Motor neuron (in vitro differentiated cells): ENCODE measurements at regions of chr5 and their contacts with region 1.

Region 1: GRCh38 chr5:83919071-83920041 is 198.7 kb upstream of the HAPLN1 start:
- ATAC-seq: peak in 2 of 8 experiments; percentile 57 to 67
- H3K4me3 ChIP-seq: no peak overlapping the region
- H3K27ac ChIP-seq: no peak overlapping the region
- H3K4me1 ChIP-seq: no peaks in the 10 kb centered on the region

Region 2: GRCh38 chr5:83740741-83741140 is 178.6 kb before region 1 on chr5:
- in situ Hi-C with region 1: loop called in 1 of 9 experiments (anchors 25 kb)
- ATAC-seq: no peak
- H3K4me3 ChIP-seq: no peak overlapping the region
- H3K27ac ChIP-seq: no peak overlapping the region
- H3K4me1 ChIP-seq: no peaks in the 10 kb centered on the region